HepG2 (cell line): ENCODE measurements at regions of chr5 and their contacts with region 1.

Region 1: GRCh38 chr5:154754460-154755360 is 467 bp upstream of the LARP1 start:
- DNase-seq: peak; percentile 96
- ATAC-seq: peak; percentile 86
- H3K4me3 ChIP-seq: peak overlapping the region; percentile 75 to 94 (median 89); a peak in 4 of 6 replicates
- H3K27ac ChIP-seq: peak overlapping the region; percentile 50
- H3K4me1 ChIP-seq: peaks cover 49% of the 10 kb centered on the region
- H3K27me3 ChIP-seq: no peaks in the 10 kb centered on the region; a peak in 1 of 5 replicates
- CTCF ChIP-seq: peak; percentile 87
- EP300 ChIP-seq: peak; percentile 32 to 43; a peak in 1 of 4 replicates
- POLR2A ChIP-seq: peak; percentile 29 to 45; a peak in 1 of 4 replicates
- RAD21 ChIP-seq: peak; percentile 78

Region 2: DNA sequence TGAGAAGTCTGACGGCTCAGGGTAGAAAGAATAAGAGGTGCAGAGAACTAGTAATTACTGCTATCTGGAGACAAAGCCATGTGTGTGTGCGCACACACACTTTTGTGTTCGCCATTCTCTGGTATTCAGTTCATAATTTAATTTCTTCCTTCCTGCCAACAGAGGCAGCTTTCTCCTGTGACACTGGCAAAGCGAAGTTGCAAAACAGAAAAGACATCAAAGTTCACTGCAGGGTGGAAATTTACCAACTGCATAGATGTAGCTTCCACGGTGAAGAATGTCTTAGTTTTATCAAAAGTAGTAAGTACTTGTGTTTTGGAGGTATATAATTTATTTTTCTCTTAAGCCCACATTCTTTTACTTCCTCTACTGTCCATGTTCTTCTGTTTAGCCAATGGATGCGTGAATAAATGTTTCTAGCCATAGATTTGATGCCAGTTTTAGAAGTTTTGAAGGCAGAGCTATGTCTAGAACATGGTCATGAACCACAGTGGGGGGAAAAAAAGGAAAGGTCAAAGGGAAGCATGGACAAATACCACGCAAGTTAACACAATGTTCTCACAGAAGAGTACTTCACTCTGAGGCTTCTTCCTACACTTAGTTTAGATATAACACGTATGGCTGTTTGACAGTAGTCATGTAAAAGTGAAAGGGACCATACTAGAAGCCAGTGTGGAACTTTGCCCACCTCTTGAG is 1800.8 kb before region 1 on chr5:
- CTCF ChIA-PET with region 1: no interaction called
- POLR2A ChIA-PET with region 1: no interaction called
- in situ Hi-C with region 1: no loop called
- intact Hi-C with region 1: no loop called
- DNase-seq: no peak
- ATAC-seq: no peak
- H3K4me3 ChIP-seq: no peak overlapping the region
- H3K27ac ChIP-seq: no peak overlapping the region
- H3K4me1 ChIP-seq: no peaks in the 10 kb centered on the region
- H3K27me3 ChIP-seq: no peaks in the 10 kb centered on the region
- CTCF ChIP-seq: no peak
- EP300 ChIP-seq: no peak
- POLR2A ChIP-seq: no peak
- RAD21 ChIP-seq: no peak

Region 3: DNA sequence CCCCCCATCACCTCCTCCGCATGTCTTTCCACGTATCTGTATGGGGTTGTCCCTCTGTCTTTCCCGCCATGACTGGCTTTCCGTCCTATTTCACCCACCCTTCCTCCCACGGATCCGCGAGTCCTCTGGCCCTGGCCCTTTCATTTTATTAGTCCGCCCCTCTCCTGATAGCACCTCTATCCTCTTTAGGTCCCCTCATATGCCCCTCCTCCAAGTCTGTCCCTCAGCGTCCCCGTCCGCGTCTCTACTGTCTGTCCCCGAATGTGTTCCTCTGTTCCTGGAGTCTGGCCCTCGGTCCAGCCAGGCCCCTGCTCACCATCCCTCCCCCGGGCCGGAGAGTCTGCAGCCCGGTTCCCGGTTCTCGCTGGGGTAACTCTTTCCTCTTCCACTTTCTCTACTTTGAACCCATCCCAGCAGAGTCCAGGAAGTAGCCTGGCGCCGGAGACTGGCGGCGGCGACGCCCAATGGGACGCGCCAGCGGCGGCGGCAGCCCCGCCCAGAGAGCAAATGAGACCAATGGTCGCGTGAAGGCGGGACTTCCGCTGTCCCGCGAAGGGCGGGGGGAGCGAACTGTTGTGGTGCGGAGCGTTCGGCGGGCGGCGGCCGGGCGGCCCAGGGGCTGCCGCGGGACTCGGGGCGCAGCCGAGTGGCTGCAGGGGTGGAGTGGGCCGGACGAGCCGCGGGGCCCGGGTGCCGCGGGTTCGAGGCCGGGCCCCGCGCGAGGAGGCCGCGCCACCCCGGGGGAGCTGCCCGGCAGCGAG is 309.1 kb before region 1 on chr5 and contains the start of gene SAP30L:
- CTCF ChIA-PET with region 1: no interaction called
- POLR2A ChIA-PET with region 1: no interaction called
- in situ Hi-C with region 1: no loop called
- intact Hi-C with region 1: no loop called
- DNase-seq: peak; percentile 89
- ATAC-seq: peak; percentile 93
- H3K4me3 ChIP-seq: peak within 1 kb of the TSS; percentile 81 to 97 (median 94)
- H3K27ac ChIP-seq: peak within 1 kb of the TSS; percentile 72
- H3K4me1 ChIP-seq: peaks cover 34% of the 10 kb centered on the region
- H3K27me3 ChIP-seq: no peaks in the 10 kb centered on the region
- CTCF ChIP-seq: no peak
- EP300 ChIP-seq: no peak
- POLR2A ChIP-seq: peak; percentile 71 to 82
- RAD21 ChIP-seq: no peak
- total RNA-seq, gene SAP30L: 35.1 and 37.2 TPM in 2 replicates

Region 4: DNA sequence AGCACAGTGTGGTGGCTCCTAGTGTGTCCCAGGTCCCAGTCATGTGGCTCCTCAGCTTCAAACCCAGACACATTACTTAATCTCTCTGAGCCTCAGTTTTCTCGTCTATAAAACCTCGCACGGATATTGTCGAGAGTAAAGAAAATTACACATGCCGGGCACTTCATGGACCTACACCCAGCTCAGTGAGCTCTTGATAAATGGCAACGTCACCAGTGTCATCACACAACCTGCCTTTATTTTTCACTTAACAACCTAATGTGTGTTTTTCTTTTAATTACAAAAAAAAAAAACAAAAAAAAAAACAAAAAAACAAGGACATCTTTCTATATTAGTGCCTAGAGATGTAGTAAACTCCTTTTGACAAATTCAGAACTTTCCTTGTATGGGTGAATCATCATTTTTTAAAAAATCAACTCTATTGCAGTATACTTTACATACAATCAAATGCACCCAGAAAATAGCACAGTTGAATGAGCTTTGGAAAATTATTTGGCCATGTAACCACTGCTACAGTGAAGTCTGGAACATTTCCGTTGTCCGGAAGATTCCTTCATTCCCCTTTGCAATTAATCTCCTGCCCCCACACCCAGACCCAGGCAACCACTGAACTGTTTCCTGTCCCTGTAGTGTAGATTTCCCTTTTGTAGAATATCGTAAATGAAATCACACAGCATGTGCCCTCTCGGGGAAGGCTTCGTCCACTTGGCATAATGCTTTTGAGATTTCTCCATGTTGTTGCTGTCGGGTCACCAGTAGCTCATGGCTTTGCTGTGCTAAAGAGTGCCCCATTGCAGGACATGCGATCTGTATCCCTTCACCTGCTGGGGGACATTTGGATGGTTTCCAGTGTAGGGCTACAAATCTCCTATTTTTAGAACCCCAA is 100.0 kb before region 1 on chr5:
- CTCF ChIA-PET with region 1: no interaction called
- POLR2A ChIA-PET with region 1: no interaction called
- in situ Hi-C with region 1: loop called (anchors 10 kb)
- intact Hi-C with region 1: loop called (anchors 5 kb)
- DNase-seq: no peak
- ATAC-seq: no peak
- H3K4me3 ChIP-seq: no peak overlapping the region
- H3K27ac ChIP-seq: peak overlapping the region; percentile 56
- H3K4me1 ChIP-seq: peaks cover 31% of the 10 kb centered on the region
- H3K27me3 ChIP-seq: no peaks in the 10 kb centered on the region
- CTCF ChIP-seq: no peak
- EP300 ChIP-seq: no peak
- POLR2A ChIP-seq: no peak
- RAD21 ChIP-seq: no peak

Region 5: DNA sequence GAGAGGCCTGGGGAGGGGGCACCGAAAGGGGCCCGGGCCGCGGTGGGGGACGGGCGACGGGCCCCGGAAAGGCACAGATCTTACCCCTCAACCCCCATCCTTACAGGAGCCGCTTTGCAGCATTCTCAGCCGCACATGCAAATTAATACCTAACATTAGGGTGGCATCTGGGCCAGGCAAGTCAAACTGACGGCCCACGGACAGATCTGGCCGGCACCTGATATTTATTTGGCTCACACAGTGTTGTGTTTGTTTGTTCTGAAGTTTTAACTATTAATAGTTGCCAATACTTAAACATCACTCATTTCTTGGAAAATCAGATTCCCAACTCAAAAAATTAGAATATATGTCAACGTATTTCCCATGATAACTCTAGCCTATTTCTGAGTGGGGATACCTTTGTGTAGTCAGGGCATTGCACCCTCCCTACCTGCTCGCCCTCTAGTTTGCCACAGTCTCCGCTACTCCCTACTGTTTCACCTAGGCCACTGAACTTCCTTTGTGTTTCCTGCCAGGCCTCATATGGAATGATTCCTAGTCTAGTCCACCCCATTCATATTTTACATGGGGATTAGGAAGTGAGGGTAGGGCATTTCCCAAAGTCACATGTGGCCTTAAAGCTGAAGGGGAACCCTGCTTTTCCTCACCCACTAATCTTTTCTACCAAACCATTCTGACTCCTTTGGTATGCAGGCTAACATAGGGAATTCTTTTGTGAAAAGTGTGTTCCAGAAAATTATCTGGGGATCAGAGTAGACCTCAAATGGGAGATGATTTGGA is 71.4 kb before region 1 on chr5:
- CTCF ChIA-PET with region 1: no interaction called
- POLR2A ChIA-PET with region 1: interaction called, 7 read pairs
- in situ Hi-C with region 1: no loop called
- intact Hi-C with region 1: loop called (anchors 1 kb)
- DNase-seq: no peak
- ATAC-seq: peak; percentile 34; the same call in 2 of the 3 replicates
- H3K4me3 ChIP-seq: peak overlapping the region; percentile 59 to 67 (median 66)
- H3K27ac ChIP-seq: peak overlapping the region; percentile 74
- H3K4me1 ChIP-seq: peaks cover 55% of the 10 kb centered on the region
- H3K27me3 ChIP-seq: no peaks in the 10 kb centered on the region
- CTCF ChIP-seq: no peak
- EP300 ChIP-seq: no peak
- POLR2A ChIP-seq: no peak
- RAD21 ChIP-seq: no peak

Region 6: GRCh38 chr5:154701110-154701572 is 53.6 kb before region 1 on chr5:
- CTCF ChIA-PET with region 1: no interaction called
- POLR2A ChIA-PET with region 1: no interaction called
- in situ Hi-C with region 1: no loop called
- intact Hi-C with region 1: loop called (anchors 5 kb)
- DNase-seq: peak; percentile 83
- ATAC-seq: peak; percentile 66
- H3K4me3 ChIP-seq: peak overlapping the region in 1 of 3 experiments; percentile 51; a peak in 2 of 6 replicates
- H3K27ac ChIP-seq: peak overlapping the region; percentile 58
- H3K4me1 ChIP-seq: peaks cover 82% of the 10 kb centered on the region
- H3K27me3 ChIP-seq: no peaks in the 10 kb centered on the region
- CTCF ChIP-seq: no peak
- EP300 ChIP-seq: peak in 1 of 2 experiments; percentile 9; a peak in 1 of 4 replicates
- POLR2A ChIP-seq: no peak
- RAD21 ChIP-seq: no peak

Region 7: GRCh38 chr5:154740483-154740882 is 14.2 kb before region 1 on chr5:
- CTCF ChIA-PET with region 1: no interaction called
- POLR2A ChIA-PET with region 1: no interaction called
- in situ Hi-C with region 1: no loop called
- intact Hi-C with region 1: loop called (anchors 1 kb)
- DNase-seq: no peak
- ATAC-seq: peak; percentile 65
- H3K4me3 ChIP-seq: no peak overlapping the region
- H3K27ac ChIP-seq: no peak overlapping the region
- H3K4me1 ChIP-seq: peaks cover 31% of the 10 kb centered on the region
- H3K27me3 ChIP-seq: no peaks in the 10 kb centered on the region
- CTCF ChIP-seq: no peak
- EP300 ChIP-seq: no peak
- POLR2A ChIP-seq: no peak
- RAD21 ChIP-seq: no peak

Region 8: GRCh38 chr5:154779105-154779504 is 24.4 kb after region 1 on chr5:
- CTCF ChIA-PET with region 1: no interaction called
- POLR2A ChIA-PET with region 1: no interaction called
- in situ Hi-C with region 1: no loop called
- intact Hi-C with region 1: loop called (anchors 2 kb)
- DNase-seq: peak; percentile 77
- ATAC-seq: peak; percentile 64
- H3K4me3 ChIP-seq: no peak overlapping the region
- H3K27ac ChIP-seq: no peak overlapping the region
- H3K4me1 ChIP-seq: peaks cover 97% of the 10 kb centered on the region
- H3K27me3 ChIP-seq: no peaks in the 10 kb centered on the region
- CTCF ChIP-seq: no peak
- EP300 ChIP-seq: no peak
- POLR2A ChIP-seq: no peak
- RAD21 ChIP-seq: no peak

Region 9: GRCh38 chr5:154857530-154858296 is 103.0 kb after region 1 on chr5:
- CTCF ChIA-PET with region 1: no interaction called
- POLR2A ChIA-PET with region 1: no interaction called
- in situ Hi-C with region 1: no loop called
- intact Hi-C with region 1: loop called (anchors 5 kb)
- DNase-seq: peak; percentile 93
- ATAC-seq: peak; percentile 89
- H3K4me3 ChIP-seq: peak overlapping the region; percentile 78 to 93 (median 85)
- H3K27ac ChIP-seq: peak overlapping the region; percentile 99
- H3K4me1 ChIP-seq: peaks cover 34% of the 10 kb centered on the region
- H3K27me3 ChIP-seq: peaks cover 0 to 4% of the 10 kb centered on the region in 2 experiments; a peak in 1 of 5 replicates
- CTCF ChIP-seq: peak; percentile 56
- EP300 ChIP-seq: no peak; a peak in 1 of 4 replicates
- POLR2A ChIP-seq: peak in 1 of 2 experiments; percentile 72
- RAD21 ChIP-seq: peak; percentile 23; the same call in 1 of the 2 replicates

Region 10: DNA sequence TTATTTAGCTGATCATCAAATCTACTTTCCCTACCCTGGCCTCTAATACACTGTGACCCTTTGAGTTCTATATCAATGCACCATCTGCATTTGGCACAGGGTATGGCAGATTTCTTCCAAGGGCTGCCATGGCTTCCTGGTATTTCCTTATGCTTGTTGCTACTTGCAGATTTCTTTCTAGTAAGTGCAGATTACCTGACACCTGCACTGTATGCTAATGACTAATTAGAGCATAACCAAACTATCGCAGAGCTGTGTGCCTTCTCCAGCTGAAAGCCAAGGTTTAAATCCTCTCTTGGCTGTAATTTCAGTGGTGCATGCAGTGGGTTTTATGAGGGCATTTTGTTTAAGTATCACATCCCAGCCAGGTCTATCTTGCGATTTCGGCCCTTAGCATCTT is 552.5 kb after region 1 on chr5:
- CTCF ChIA-PET with region 1: no interaction called
- POLR2A ChIA-PET with region 1: no interaction called
- in situ Hi-C with region 1: no loop called
- intact Hi-C with region 1: no loop called
- DNase-seq: no peak
- ATAC-seq: no peak
- H3K4me3 ChIP-seq: no peak overlapping the region
- H3K27ac ChIP-seq: no peak overlapping the region
- H3K4me1 ChIP-seq: no peaks in the 10 kb centered on the region
- H3K27me3 ChIP-seq: no peaks in the 10 kb centered on the region
- CTCF ChIP-seq: no peak
- EP300 ChIP-seq: no peak
- POLR2A ChIP-seq: no peak
- RAD21 ChIP-seq: no peak